GM12878 (cell line): ENCODE measurements at regions of chr9 and their contacts with region 1.

Region 1: DNA sequence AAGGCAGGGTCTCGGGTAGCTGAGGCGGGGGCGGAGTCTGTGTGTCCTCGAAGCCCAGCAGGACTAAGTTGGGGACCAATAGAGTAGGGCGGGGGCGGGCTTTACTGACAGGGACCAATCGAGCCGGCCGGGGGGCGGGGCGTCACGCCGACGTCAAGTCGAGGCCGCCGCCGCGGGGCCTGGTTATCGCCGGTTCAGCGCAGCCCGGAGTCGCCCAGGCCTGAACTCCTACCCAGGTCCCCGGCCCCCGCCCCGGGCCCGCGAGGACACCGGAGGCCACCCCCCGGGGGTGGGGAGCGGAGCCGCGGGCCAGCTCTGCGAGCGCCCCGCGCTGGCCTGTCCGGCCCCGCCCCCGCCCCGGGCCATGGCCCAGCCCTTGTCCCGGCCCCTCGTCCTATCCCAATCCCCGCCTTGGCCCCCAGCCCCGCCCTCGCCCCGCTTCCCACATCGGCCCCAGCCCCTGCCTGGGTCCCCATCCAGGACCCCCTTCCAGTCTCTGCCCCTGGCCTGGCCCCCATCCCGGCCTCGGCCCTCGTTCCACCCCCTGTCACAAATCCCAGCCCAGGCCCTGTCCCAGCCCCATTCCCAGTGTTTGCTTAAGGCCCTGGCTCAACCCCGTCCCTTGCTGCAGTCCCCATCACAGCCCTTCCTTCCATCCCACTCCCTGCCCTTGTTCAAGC is at the start of gene TMEM8B:
- DNase-seq: no peak
- ATAC-seq: peak; percentile 90
- H3K4me3 ChIP-seq: peak within 1 kb of the TSS; percentile 78
- H3K27ac ChIP-seq: peak within 1 kb of the TSS; percentile 45; the same call in 1 of the 2 replicates
- H3K4me1 ChIP-seq: peaks cover 15% of the 10 kb centered on the region
- H3K27me3 ChIP-seq: no peaks in the 10 kb centered on the region
- CTCF ChIP-seq: no peak
- EP300 ChIP-seq: no peak
- POLR2A ChIP-seq: peak; percentile 76
- RAD21 ChIP-seq: no peak
- polyA plus RNA-seq, gene TMEM8B: 0.19 to 0.71 TPM

Region 2: DNA sequence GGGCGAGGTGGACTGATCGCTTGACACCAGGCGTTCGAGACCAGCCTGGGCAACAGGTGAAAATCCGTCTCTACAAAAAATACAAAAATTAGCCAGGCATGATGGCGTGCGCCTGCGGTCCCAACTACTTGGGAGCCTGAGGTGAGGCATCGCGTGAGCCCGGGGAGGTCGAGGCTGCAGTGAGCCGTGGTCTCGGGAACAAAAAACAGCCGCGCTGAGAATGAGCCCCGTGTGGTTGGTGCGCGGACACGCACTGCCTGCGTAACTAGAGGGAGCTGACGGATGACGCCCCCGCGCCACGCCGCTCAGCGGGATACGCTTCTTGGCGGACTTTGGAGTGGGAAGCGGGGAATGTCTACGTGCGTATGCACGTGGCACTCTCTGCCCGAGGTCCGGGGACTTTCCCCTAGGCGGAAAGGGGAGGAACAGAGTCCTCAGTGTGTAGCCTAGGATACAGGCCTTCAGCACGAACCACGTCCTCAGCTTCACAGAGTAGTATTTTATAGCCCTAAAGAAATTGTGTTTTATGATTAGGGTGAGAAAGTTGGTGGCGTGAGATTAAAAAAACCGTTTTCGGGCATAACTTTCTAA is 171.6 kb before region 1 on chr9 and contains the start of gene RMRP:
- CTCF ChIA-PET with region 1: interaction called, 23 read pairs
- POLR2A ChIA-PET with region 1: no interaction called
- RAD21 ChIA-PET with region 1: interaction called, 3 read pairs
- SMC1A ChIA-PET with region 1: interaction called, 3 read pairs
- in situ Hi-C with region 1: no loop called
- intact Hi-C with region 1: loop called (anchors 10 kb)
- DNase-seq: peak; percentile 96
- ATAC-seq: peak; percentile 93
- H3K4me3 ChIP-seq: peak within 1 kb of the TSS; percentile 85
- H3K27ac ChIP-seq: peak within 1 kb of the TSS; percentile 90
- H3K4me1 ChIP-seq: peaks cover 22% of the 10 kb centered on the region
- H3K27me3 ChIP-seq: no peaks in the 10 kb centered on the region
- CTCF ChIP-seq: no peak
- EP300 ChIP-seq: peak in 1 of 2 experiments; percentile 63; a peak in 3 of 4 replicates
- POLR2A ChIP-seq: no peak
- RAD21 ChIP-seq: no peak
- polyA plus RNA-seq, gene RMRP: not detected

Region 3: DNA sequence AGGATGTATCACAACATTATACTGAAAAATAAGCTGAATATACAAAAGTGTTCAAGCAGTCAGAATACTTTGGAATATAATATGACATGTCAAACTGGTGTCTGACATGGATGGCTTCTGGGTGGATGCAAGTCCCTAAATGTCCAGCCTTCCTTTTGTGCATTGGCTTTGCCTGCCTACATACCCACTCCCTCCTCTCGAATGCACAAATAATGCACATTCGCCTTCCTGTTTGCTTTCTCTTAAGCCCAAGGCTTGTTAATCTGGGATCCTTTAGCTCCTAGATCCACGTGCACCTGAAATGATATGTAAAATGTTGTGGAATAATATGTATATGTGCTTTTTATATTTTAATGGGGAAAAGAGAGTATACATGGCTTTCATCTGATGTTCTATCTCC is 50.7 kb before region 1 on chr9:
- CTCF ChIA-PET with region 1: interaction called, 13 read pairs
- POLR2A ChIA-PET with region 1: no interaction called
- RAD21 ChIA-PET with region 1: interaction called, 5 read pairs
- SMC1A ChIA-PET with region 1: no interaction called
- in situ Hi-C with region 1: no loop called
- intact Hi-C with region 1: no loop called
- DNase-seq: no peak
- ATAC-seq: no peak
- H3K4me3 ChIP-seq: no peak overlapping the region
- H3K27ac ChIP-seq: no peak overlapping the region
- H3K4me1 ChIP-seq: no peaks in the 10 kb centered on the region
- H3K27me3 ChIP-seq: no peaks in the 10 kb centered on the region
- CTCF ChIP-seq: no peak
- EP300 ChIP-seq: no peak
- POLR2A ChIP-seq: no peak
- RAD21 ChIP-seq: no peak

Region 4: GRCh38 chr9:35797311-35798109 is 31.7 kb before region 1 on chr9:
- CTCF ChIA-PET with region 1: interaction called, 14 read pairs
- POLR2A ChIA-PET with region 1: no interaction called
- RAD21 ChIA-PET with region 1: no interaction called
- SMC1A ChIA-PET with region 1: no interaction called
- in situ Hi-C with region 1: no loop called
- intact Hi-C with region 1: no loop called
- DNase-seq: no peak
- ATAC-seq: peak; percentile 66
- H3K4me3 ChIP-seq: no peak overlapping the region
- H3K27ac ChIP-seq: no peak overlapping the region
- H3K4me1 ChIP-seq: peaks cover 21% of the 10 kb centered on the region
- H3K27me3 ChIP-seq: no peaks in the 10 kb centered on the region
- CTCF ChIP-seq: no peak
- EP300 ChIP-seq: no peak
- POLR2A ChIP-seq: no peak
- RAD21 ChIP-seq: no peak

Region 5: DNA sequence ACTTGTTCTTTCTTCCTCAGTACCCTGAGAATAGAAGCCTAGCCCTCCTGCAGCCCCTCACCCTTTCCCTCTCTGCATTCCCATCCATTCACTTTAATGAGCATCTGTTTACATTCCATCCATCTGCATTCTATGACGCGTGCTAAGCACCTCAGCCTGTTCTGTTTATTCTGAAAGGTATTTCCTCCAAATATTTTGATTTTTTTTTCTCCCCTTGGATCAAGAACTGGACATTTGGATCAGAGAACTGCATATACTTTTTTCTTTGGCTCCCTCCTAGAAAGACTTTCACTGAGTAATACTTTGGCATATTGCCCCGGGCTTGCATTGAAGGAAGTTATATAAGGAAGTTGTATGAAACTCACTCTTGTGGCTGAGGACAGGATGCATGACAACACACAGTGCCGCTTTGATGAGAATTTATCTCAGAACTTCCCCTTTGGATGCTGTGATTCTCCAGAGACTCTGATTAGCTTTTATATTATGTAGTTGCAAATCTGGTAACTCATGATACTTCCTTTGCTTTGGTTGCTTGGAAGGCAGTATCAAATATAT is 15.6 kb after region 1 on chr9:
- CTCF ChIA-PET with region 1: interaction called, 49 read pairs
- POLR2A ChIA-PET with region 1: interaction called, 80 read pairs
- RAD21 ChIA-PET with region 1: interaction called, 41 read pairs
- SMC1A ChIA-PET with region 1: interaction called, 118 read pairs
- in situ Hi-C with region 1: no loop called
- intact Hi-C with region 1: loop called (anchors 1 kb)
- DNase-seq: peak; percentile 64
- ATAC-seq: peak; percentile 48
- H3K4me3 ChIP-seq: no peak overlapping the region
- H3K27ac ChIP-seq: peak overlapping the region; percentile 77
- H3K4me1 ChIP-seq: peaks cover 81% of the 10 kb centered on the region
- H3K27me3 ChIP-seq: no peaks in the 10 kb centered on the region
- CTCF ChIP-seq: no peak
- EP300 ChIP-seq: 0 out of 4 replicates have a peak, but pooled peaks of 1 of the 2 experiments have one; percentile 18
- POLR2A ChIP-seq: no peak
- RAD21 ChIP-seq: no peak

Region 6: DNA sequence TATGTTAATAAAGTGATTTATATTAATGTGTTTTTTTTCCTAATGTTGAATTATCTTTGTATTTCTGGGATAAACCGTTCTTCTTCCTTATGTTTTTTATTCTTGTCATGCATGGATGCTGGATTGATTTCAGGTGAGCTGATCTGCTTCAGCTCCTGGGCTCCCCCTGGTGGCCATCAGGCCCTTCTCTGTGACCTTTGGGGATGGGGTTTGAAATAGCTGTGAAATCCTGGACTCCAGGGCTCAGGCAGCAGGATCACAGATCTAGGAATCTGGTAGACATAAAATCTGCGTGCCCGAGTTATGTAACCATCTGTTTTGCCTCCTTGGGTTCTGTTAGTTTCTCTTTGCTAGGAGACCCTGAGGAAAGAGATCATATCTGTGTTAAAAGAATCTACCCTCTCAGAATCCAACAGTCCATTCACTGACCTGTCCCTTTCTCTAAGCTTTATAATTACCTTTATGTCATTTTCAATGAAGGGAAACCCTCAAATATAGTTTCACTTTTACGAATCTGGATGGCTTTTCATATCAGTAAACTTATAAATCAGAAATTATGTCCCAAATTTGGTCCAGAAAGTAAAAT is 53.1 kb after region 1 on chr9:
- CTCF ChIA-PET with region 1: interaction called, 292 read pairs
- POLR2A ChIA-PET with region 1: interaction called, 11 read pairs
- RAD21 ChIA-PET with region 1: interaction called, 138 read pairs
- SMC1A ChIA-PET with region 1: interaction called, 117 read pairs
- in situ Hi-C with region 1: loop called (anchors 5 kb)
- intact Hi-C with region 1: loop called (anchors 1 kb)
- DNase-seq: peak; percentile 20
- ATAC-seq: peak; percentile 83
- H3K4me3 ChIP-seq: no peak overlapping the region
- H3K27ac ChIP-seq: no peak overlapping the region
- H3K4me1 ChIP-seq: no peaks in the 10 kb centered on the region
- H3K27me3 ChIP-seq: no peaks in the 10 kb centered on the region
- CTCF ChIP-seq: peak; percentile 93 to 96 (median 93)
- EP300 ChIP-seq: no peak
- POLR2A ChIP-seq: no peak
- RAD21 ChIP-seq: peak; percentile 97